Natural killer cell (primary cell): ENCODE measurements at regions of chr1 and their contacts with region 1.

Region 1: GRCh38 chr1:115138968-115139367 is 49.7 kb upstream of the TSPAN2 start:
- DNase-seq: peak; percentile 45 to 80
- ATAC-seq: peak; percentile 82 to 97 (median 92)
- H3K4me3 ChIP-seq: no peak overlapping the region
- H3K4me3 Mint-ChIP-seq: no peak overlapping the region
- H3K27ac ChIP-seq: no peak overlapping the region
- H3K27ac Mint-ChIP-seq: peak overlapping the region in 1 of 2 donors; percentile 34
- H3K4me1 ChIP-seq: peaks cover 4% of the 10 kb centered on the region
- H3K4me1 Mint-ChIP-seq: peaks cover 6 to 8% of the 10 kb centered on the region in 2 donors
- H3K27me3 ChIP-seq: no peaks in the 10 kb centered on the region
- H3K27me3 Mint-ChIP-seq: peaks cover 33 to 40% of the 10 kb centered on the region in 2 donors
- CTCF ChIP-seq: peak; percentile 84

Region 2: DNA sequence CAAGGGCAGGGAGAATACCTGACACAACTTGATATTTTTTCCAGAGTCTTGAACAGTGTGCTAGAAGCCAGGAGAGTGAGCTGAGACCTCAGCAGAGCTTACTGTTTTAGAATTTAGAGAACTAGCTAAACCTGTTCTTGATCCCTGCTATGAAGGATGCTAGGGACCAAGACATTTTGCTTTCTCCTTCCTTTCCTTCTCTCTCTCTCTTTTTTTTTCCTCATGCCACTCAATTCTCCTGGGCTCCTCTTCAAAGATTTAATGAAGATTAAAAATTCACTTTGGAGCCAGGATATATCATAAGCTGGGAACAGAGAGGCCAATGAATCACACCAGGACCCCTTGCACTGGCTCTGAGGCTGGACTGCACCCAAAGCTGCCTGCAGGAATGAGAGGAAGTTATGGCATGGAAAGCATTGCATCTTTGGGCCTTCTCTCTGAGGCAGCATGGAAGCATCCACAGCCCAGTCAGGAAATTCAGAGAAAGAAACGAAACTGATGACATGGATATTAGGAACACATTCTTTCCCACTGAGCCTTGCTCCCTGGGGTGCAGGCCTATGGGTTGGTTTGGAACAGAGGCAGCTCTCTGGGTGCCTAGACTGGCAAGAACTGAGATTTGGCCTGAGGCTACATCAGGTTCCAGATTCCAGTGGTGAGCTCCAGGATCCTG is 100.3 kb after region 1 on chr1:
- intact Hi-C with region 1: no loop called
- DNase-seq: no peak
- ATAC-seq: no peak
- H3K4me3 ChIP-seq: no peak overlapping the region
- H3K4me3 Mint-ChIP-seq: no peak overlapping the region
- H3K27ac ChIP-seq: no peak overlapping the region
- H3K27ac Mint-ChIP-seq: no peak overlapping the region
- H3K4me1 ChIP-seq: no peaks in the 10 kb centered on the region
- H3K4me1 Mint-ChIP-seq: no peaks in the 10 kb centered on the region
- H3K27me3 ChIP-seq: no peaks in the 10 kb centered on the region
- H3K27me3 Mint-ChIP-seq: peaks cover 13 to 24% of the 10 kb centered on the region in 2 donors
- CTCF ChIP-seq: no peak

Region 3: GRCh38 chr1:115706587-115707425 is 567.8 kb after region 1 on chr1:
- intact Hi-C with region 1: loop called (anchors 5 kb)
- DNase-seq: peak in 1 of 2 donors; percentile 52
- ATAC-seq: peak in 2 of 3 donors; percentile 47 to 67
- H3K4me3 ChIP-seq: no peak overlapping the region
- H3K4me3 Mint-ChIP-seq: no peak overlapping the region
- H3K27ac ChIP-seq: no peak overlapping the region
- H3K27ac Mint-ChIP-seq: no peak overlapping the region
- H3K4me1 ChIP-seq: no peaks in the 10 kb centered on the region
- H3K4me1 Mint-ChIP-seq: no peaks in the 10 kb centered on the region
- H3K27me3 ChIP-seq: no peaks in the 10 kb centered on the region
- H3K27me3 Mint-ChIP-seq: peaks cover 13 to 16% of the 10 kb centered on the region in 2 donors
- CTCF ChIP-seq: peak; percentile 74